ENCODE measurements at regions of chr3 and their contacts with region 1.

Region 1: DNA sequence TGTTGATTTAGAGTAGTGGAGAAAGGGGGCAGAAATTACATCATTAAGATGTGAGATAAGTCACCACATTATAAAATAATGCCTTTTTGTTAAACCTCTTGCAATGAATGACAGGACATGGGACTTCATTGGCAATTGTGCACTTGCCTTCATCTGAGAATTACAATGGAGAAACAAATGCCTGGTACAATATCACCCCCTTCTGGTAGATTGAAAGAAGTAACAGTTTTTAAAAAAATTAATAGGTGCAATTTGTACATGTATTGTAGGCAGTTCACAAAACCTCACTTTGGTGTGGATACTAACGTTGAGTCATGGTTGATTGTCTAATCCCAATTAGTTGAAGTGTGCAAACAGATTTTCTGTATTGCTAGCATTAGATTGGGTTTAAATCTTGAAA is 4.6 kb upstream of the P2RY14 start:
- DNase-seq: no peak
- H3K4me3 ChIP-seq: no peak overlapping the region
- H3K27ac ChIP-seq: peak overlapping the region in 1 of 4 donors; percentile 55
- H3K4me1 ChIP-seq: peaks cover 0 to 45% (median 19%) of the 10 kb centered on the region in 4 donors
- H3K27me3 ChIP-seq: no peaks in the 10 kb centered on the region
- CTCF ChIP-seq: peak; percentile 62 to 72 (median 66)
- EP300 ChIP-seq: no peak
- POLR2A ChIP-seq: no peak

Region 2: GRCh38 chr3:151168269-151169094 is 114.4 kb before region 1 on chr3:
- intact Hi-C with region 1: loop called (anchors 2 kb)
- DNase-seq: no peak
- H3K4me3 ChIP-seq: no peak overlapping the region
- H3K27ac ChIP-seq: peak overlapping the region in 2 of 4 donors; percentile 8 to 30
- H3K4me1 ChIP-seq: peaks cover 0 to 5% (median 0%) of the 10 kb centered on the region in 4 donors
- H3K27me3 ChIP-seq: no peaks in the 10 kb centered on the region
- CTCF ChIP-seq: peak; percentile 70 to 74 (median 73)
- EP300 ChIP-seq: no peak
- POLR2A ChIP-seq: no peak

Region 3: DNA sequence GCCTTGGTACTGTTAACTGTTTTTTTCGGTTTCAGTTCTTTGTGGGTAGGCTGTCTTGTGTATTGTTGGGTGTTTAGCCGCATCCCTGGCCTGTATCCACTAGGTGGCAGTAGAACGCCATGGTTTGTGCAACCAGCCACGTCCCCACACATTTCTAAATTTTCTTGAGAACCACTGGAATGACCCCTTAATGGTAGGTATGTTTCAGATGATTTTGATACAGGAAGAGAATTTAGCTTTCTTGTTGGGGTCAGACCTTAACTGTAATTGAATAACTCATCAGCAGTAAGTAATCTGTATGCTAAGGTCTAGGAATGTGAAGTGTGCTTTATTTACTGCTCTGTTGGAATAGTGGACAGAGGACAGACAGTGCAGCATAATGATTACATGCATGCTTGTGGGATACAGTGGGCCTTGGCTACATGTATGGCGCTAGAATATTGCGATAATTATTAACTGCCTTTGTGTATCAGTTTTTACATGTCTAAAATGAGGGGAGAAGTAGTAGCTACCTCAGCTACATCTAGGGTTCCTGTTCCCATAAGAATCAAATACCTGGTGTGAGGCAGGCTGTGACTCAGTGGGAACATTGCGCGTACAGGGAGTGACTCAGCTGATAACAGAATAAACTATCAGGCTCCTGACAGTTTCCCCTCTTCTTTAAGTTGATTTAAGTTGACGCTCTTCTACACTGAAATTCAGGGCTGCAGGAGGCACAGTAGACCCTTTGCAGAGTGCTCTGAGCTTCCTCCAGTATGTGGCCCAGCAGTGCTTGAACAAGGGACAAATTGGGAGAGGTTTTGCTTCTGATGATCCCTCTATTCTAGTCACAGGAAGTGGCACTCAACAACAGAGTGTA is 54.9 kb before region 1 on chr3:
- intact Hi-C with region 1: loop called (anchors 1 kb)
- DNase-seq: peak; percentile 95
- H3K4me3 ChIP-seq: no peak overlapping the region
- H3K27ac ChIP-seq: peak overlapping the region in 3 of 4 donors; percentile 44 to 66 (median 45)
- H3K4me1 ChIP-seq: peaks cover 13 to 43% (median 38%) of the 10 kb centered on the region in 4 donors
- H3K27me3 ChIP-seq: no peaks in the 10 kb centered on the region
- CTCF ChIP-seq: peak; percentile 87 to 93 (median 91)
- EP300 ChIP-seq: no peak
- POLR2A ChIP-seq: no peak

Measured in esophagus muscularis mucosa (tissue), 4 donors.